A673 (cell line): ENCODE measurements at regions of chr2 and their contacts with region 1.

Region 1: DNA sequence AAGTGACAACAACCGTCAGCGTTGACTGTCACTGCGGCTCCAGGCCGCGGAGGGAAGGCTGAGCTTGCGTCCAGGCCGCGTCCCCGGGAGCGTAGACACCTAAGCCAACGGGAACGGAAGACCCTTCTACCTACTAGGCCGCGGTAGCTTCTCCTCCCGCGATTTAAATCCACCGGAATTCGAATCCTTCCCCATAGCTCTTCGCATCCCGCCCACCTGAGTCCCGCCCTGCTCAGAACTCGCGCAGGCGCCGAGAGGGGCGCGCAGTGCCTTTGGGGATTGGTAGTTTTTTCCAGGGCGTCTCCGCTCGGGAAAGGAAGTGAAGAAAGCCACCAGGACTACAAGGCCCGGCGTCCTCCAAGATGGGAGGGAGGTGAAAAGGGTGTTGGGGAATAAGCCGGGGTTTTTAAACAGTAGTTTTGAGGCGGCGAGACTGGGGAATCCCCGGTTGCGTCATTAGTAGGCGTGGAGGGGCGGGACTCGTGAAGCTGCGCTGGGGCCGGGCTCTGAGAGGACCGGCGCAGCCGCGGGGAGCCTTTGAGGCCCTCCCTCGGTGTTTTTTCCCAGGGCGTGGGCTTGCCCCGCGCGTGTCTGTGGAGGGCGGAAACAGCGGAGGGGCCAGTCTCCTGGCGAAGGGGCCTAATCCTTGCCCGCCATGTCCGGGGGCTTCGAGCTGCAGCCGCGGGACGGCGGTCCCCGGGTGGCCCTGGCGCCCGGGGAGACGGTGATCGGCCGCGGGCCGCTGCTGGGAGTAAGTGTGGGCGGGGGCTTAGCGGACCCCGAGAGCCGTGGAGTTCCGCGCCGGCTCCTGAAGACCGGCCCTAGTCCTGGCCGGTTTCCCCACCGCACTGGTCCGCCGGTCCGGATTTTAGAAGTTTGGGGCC is at the starts of genes APLF and FBXO48:
- DNase-seq: peak; percentile 100
- H3K4me3 ChIP-seq: peak within 1 kb of the TSS; percentile 88
- H3K27ac ChIP-seq: peak within 1 kb of the TSS; percentile 85
- H3K4me1 ChIP-seq: peaks cover 14% of the 10 kb centered on the region
- H3K27me3 ChIP-seq: no peaks in the 10 kb centered on the region
- CTCF ChIP-seq: no peak
- total RNA-seq, gene APLF: 5.5 and 6.4 TPM in 2 replicates
- total RNA-seq, gene FBXO48: 2.0 and 2.6 TPM in 2 replicates

Region 2: DNA sequence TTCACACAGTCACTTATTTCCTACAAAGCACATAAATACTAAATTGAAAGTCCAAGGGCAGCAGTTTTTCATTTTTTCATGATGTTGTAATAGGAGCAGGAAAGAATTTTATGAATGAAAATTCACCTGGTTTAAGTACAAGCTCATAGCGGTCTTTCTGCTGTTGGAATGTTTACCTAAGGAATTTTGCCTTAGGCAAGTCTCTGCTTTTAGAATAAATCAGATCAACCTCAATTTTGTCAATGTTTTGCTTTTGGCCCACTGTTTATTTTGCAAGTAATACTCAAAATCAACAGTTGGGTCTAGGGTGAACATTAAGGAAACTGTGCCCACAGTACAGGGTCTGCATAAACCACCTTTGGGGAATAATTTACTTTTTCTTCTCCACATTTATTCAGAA is 1030.1 kb before region 1 on chr2:
- CTCF ChIA-PET with region 1: no interaction called
- POLR2A ChIA-PET with region 1: no interaction called
- intact Hi-C with region 1: no loop called
- DNase-seq: no peak
- H3K4me3 ChIP-seq: no peak overlapping the region
- H3K27ac ChIP-seq: no peak overlapping the region
- H3K4me1 ChIP-seq: no peaks in the 10 kb centered on the region
- H3K27me3 ChIP-seq: no peaks in the 10 kb centered on the region
- CTCF ChIP-seq: no peak

Region 3: DNA sequence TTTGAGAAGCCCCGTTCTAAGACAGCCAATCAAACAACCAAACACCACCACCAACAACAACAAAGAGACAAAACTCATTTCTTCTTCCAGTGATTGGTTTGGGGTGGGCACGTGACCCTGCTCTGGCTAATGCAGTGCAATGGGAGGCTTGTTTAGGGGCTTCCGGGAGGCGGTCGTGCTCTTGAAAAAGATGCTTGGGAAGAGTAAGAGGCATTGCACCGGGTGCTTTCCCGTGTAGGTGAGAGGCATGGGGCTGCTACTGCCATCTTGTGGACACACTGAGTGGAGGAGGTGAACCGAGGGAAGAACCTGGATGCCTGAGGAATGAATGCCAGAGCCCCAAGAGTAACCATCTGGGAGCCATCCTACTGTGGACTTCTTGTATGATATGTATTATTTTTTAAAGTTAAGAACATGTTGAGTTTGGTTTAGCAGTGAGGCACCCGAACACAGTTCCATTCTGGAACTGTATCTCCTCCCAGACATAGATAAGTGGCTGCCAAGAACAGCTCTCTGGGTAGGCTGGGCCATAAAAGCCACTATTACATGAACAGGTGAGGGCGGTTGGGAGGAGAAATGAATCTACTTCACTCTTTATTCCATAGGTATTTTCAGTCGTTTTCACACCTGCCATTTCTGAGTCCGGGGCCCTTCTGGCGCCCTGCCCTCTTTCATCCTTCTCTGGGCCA is 248.2 kb after region 1 on chr2:
- CTCF ChIA-PET with region 1: interaction called, 6 read pairs
- POLR2A ChIA-PET with region 1: no interaction called
- intact Hi-C with region 1: loop called (anchors 1 kb)
- DNase-seq: peak; percentile 87
- H3K4me3 ChIP-seq: no peak overlapping the region
- H3K27ac ChIP-seq: no peak overlapping the region
- H3K4me1 ChIP-seq: peaks cover 7% of the 10 kb centered on the region
- H3K27me3 ChIP-seq: no peaks in the 10 kb centered on the region
- CTCF ChIP-seq: peak; percentile 85

Region 4: GRCh38 chr2:68837164-68837860 is 370.0 kb after region 1 on chr2:
- CTCF ChIA-PET with region 1: interaction called, 5 read pairs
- POLR2A ChIA-PET with region 1: no interaction called
- intact Hi-C with region 1: loop called (anchors 5 kb)
- DNase-seq: peak; percentile 58
- H3K4me3 ChIP-seq: no peak overlapping the region
- H3K27ac ChIP-seq: no peak overlapping the region
- H3K4me1 ChIP-seq: no peaks in the 10 kb centered on the region
- H3K27me3 ChIP-seq: no peaks in the 10 kb centered on the region
- CTCF ChIP-seq: peak; percentile 72

Region 5: DNA sequence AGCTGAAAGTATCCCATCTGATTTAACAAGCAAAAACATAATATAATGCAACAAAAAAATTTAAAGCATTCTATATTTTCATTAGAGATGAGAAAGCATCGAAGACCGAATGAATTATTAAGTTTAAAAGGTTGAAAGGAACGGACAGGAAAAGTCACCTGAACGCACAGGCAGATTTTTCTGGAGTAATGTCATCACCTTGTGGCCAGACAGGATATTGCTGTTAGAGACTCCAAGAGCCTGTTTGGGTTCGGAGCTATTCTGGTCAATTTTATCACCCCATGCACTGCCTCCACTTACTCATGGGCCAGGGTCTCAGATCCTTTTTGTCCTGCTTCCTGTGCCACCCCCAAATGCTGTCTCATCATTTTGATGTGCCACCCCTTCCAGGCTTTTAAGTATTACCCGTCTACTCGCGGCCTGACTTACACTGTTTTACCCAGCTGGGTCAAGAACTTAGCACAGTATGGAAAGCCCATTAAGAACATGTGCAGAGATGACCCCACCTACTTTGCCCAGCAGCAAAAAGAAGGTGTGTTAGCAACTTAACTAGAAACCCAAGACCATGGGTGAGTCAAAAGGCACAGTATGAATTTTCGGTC is 458.1 kb after region 1 on chr2:
- CTCF ChIA-PET with region 1: interaction called, 26 read pairs
- POLR2A ChIA-PET with region 1: no interaction called
- intact Hi-C with region 1: loop called (anchors 5 kb)
- DNase-seq: peak; percentile 62
- H3K4me3 ChIP-seq: no peak overlapping the region
- H3K27ac ChIP-seq: no peak overlapping the region
- H3K4me1 ChIP-seq: no peaks in the 10 kb centered on the region
- H3K27me3 ChIP-seq: no peaks in the 10 kb centered on the region
- CTCF ChIP-seq: peak; percentile 80

Region 6: DNA sequence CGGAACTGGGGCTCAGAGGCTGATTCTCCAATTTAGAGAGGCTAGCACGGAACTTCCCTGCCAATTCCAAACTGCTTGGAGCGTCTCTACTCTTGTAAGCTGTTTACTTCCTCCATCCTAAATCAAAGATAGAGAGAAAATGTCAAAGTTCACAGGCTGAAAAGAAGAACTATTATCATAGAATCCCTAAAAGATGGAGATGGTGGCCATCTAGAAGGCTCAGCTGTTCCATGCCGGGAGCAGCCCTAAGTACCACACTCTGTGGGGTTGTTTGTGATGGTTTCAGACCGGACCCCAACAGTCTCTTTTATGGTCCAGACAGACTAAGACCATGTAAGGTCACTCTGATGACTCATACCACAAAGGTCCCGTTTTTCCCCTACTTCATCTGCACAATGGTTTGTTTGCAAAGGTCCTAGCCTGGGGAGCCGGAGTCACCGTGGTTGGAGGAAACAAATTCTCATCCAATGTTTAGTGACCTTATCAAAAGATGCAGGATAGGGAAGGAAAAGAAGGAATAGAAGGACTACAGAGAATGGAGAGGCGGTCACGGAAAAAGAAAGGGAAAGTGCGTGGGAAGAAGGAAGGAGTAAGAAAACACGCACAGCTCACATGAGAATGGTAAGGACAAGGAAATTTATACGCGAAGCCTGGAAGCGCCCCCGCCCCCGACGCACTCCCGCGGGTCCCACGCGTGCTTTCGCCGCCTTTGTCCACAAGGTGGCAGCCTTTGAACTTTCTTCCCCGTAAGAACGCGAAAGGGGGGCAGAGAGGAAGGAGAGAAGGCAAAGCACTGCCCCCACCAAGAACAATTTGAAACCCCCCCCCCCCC is 545.2 kb after region 1 on chr2:
- CTCF ChIA-PET with region 1: no interaction called
- POLR2A ChIA-PET with region 1: no interaction called
- intact Hi-C with region 1: loop called (anchors 5 kb)
- DNase-seq: peak; percentile 88
- H3K4me3 ChIP-seq: peak overlapping the region; percentile 95
- H3K27ac ChIP-seq: peak overlapping the region; percentile 86
- H3K4me1 ChIP-seq: peaks cover 41% of the 10 kb centered on the region
- H3K27me3 ChIP-seq: no peaks in the 10 kb centered on the region
- CTCF ChIP-seq: peak; percentile 89

Region 7: GRCh38 chr2:69306822-69307578 is 839.7 kb after region 1 on chr2:
- CTCF ChIA-PET with region 1: interaction called, 3 read pairs
- POLR2A ChIA-PET with region 1: no interaction called
- intact Hi-C with region 1: loop called (anchors 10 kb)
- DNase-seq: peak; percentile 93
- H3K4me3 ChIP-seq: peak overlapping the region; percentile 72
- H3K27ac ChIP-seq: peak overlapping the region; percentile 53
- H3K4me1 ChIP-seq: peaks cover 9% of the 10 kb centered on the region
- H3K27me3 ChIP-seq: no peaks in the 10 kb centered on the region
- CTCF ChIP-seq: peak; percentile 81